WTC11 (cell line): ENCODE measurements at regions of chr7 and their contacts with region 1.

Region 1: DNA sequence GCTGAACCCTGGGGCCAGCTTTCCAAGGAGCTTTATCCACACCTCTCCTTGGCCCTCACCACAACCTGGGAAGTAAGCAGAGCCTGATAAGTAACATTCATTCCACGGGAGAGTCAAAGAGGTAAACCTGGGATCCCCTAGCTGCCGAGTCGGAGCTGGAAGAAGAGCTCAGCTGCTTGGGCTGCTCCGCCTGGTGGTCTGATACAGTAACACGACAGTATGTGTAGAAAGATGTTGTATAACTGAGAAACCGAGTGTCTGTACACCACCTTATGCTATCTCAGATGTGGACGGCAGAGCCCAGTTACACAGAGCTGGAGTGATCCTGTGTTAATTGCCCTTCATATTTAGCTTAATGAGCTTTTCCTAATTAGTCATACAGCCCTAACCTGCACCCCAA is 151.3 kb upstream of the KMT2E start:
- DNase-seq: peak; percentile 54
- ATAC-seq: peak; percentile 81; the same call in 1 of the 2 replicates
- H3K4me3 Mint-ChIP-seq: no peak overlapping the region
- H3K27ac Mint-ChIP-seq: no peak overlapping the region
- H3K4me1 Mint-ChIP-seq: no peaks in the 10 kb centered on the region
- H3K27me3 Mint-ChIP-seq: peaks cover 57% of the 10 kb centered on the region
- CTCF ChIP-seq: peak; percentile 62; the same call in 1 of the 2 replicates

Region 2: DNA sequence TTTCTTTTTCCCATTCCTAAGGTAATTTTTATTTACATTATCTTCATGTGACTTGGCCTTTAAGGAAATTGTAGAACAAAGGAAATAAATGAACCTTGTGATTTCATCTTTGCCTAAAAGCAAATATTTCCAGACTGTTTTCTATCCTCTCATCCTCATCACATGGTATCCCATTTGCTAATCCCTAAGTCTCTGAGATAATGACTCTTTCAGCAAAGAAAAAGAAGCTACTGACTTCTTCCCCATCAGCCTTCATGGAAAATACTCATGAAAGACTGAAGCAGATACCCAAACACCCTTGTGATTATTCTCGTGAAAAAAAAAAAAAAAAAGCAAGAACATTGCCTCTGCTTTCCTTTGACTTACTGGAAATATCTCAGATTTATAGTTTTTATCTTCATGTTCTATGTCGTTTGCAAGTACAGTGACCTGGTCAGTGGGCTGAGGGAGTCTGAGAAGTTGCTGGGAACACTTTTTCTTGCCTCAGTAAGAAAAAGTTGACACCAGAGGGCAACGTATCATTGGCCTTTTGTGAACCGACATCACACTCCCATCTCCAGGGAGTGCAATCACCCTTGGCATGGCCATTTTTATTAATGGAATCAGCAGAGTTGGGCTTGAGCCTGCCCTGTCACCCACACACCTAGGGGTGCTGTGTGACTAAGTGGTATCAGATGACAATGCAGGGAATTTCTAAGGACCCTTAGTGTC is 94.7 kb before region 1 on chr7:
- CTCF ChIA-PET with region 1: interaction called, 12 read pairs
- POLR2A ChIA-PET with region 1: no interaction called
- DNase-seq: no peak
- ATAC-seq: no peak
- H3K4me3 Mint-ChIP-seq: no peak overlapping the region
- H3K27ac Mint-ChIP-seq: no peak overlapping the region
- H3K4me1 Mint-ChIP-seq: peaks cover 15% of the 10 kb centered on the region
- H3K27me3 Mint-ChIP-seq: no peaks in the 10 kb centered on the region; the same call in 1 of the 2 replicates
- CTCF ChIP-seq: no peak

Region 3: DNA sequence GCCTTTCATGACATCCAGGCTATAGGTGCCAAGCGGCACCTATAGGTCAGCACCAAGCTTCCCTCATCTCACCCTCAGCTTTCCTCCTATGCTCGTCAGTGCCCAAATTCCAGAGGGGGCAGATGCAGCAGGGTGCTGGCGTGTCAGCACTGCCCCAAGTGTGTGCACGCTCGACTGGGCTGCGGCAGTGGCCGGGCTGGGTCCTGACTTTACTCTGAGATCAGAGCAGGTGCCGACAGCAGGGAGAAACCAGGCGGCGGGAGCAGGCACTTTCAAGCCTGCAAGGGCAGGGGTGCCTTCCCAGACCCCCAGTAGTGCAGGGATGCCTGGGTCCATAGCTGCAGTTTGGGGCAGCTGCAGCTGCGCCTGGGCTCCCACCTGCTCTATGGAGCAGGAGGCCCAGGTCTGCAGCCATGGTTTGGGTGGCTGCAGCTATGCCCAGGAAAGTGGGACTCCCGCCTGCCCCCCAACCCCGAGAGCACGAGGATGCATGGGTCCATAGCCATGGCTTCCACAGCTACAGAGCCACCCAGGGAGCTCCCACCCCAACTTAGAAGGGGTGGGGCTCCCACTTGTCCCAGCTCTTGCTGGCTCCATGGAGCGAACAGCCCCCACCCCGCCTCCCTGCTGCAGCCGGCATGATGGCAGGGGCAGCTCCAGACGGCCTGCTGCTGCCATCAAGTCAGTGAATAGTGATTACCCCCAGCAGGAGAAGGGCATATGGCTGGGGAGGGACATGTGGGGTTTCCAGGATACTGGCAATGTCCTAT is 47.9 kb before region 1 on chr7:
- CTCF ChIA-PET with region 1: no interaction called
- POLR2A ChIA-PET with region 1: no interaction called
- DNase-seq: no peak
- ATAC-seq: no peak
- H3K4me3 Mint-ChIP-seq: no peak overlapping the region
- H3K27ac Mint-ChIP-seq: no peak overlapping the region
- H3K4me1 Mint-ChIP-seq: peaks cover 27% of the 10 kb centered on the region
- H3K27me3 Mint-ChIP-seq: no peaks in the 10 kb centered on the region; the same call in 1 of the 2 replicates
- CTCF ChIP-seq: no peak

Region 4: GRCh38 chr7:104848138-104848990 is 14.4 kb before region 1 on chr7:
- CTCF ChIA-PET with region 1: interaction called, 24 read pairs
- POLR2A ChIA-PET with region 1: no interaction called
- DNase-seq: peak; percentile 84
- ATAC-seq: peak; percentile 94
- H3K4me3 Mint-ChIP-seq: no peak overlapping the region
- H3K27ac Mint-ChIP-seq: no peak overlapping the region
- H3K4me1 Mint-ChIP-seq: no peaks in the 10 kb centered on the region
- H3K27me3 Mint-ChIP-seq: no peaks in the 10 kb centered on the region
- CTCF ChIP-seq: peak; percentile 96